ENCODE measurements at regions of chr17 and their contacts with region 1.

Region 1: GRCh38 chr17:42287926-42288802 is at the start of gene STAT5A:
- DNase-seq: peak; percentile 77
- H3K4me3 Mint-ChIP-seq: peak within 1 kb of the TSS; percentile 90
- H3K27ac Mint-ChIP-seq: peak within 1 kb of the TSS; percentile 95
- H3K4me1 Mint-ChIP-seq: peaks cover 41% of the 10 kb centered on the region
- H3K27me3 Mint-ChIP-seq: no peaks in the 10 kb centered on the region
- total RNA-seq, gene STAT5A: 288 and 302 TPM in 2 replicates

Region 2: GRCh38 chr17:41885733-41886132 is 402.4 kb before region 1 on chr17:
- intact Hi-C with region 1: no loop called
- DNase-seq: no peak
- H3K4me3 Mint-ChIP-seq: no peak overlapping the region
- H3K27ac Mint-ChIP-seq: no peak overlapping the region
- H3K4me1 Mint-ChIP-seq: peaks cover 3% of the 10 kb centered on the region
- H3K27me3 Mint-ChIP-seq: no peaks in the 10 kb centered on the region

Region 3: GRCh38 chr17:42221937-42222745 is 66.0 kb before region 1 on chr17:
- intact Hi-C with region 1: loop called (anchors 1 kb)
- DNase-seq: peak; percentile 38
- H3K4me3 Mint-ChIP-seq: no peak overlapping the region
- H3K27ac Mint-ChIP-seq: peak overlapping the region; percentile 22
- H3K4me1 Mint-ChIP-seq: peaks cover 4% of the 10 kb centered on the region
- H3K27me3 Mint-ChIP-seq: no peaks in the 10 kb centered on the region

Region 4: DNA sequence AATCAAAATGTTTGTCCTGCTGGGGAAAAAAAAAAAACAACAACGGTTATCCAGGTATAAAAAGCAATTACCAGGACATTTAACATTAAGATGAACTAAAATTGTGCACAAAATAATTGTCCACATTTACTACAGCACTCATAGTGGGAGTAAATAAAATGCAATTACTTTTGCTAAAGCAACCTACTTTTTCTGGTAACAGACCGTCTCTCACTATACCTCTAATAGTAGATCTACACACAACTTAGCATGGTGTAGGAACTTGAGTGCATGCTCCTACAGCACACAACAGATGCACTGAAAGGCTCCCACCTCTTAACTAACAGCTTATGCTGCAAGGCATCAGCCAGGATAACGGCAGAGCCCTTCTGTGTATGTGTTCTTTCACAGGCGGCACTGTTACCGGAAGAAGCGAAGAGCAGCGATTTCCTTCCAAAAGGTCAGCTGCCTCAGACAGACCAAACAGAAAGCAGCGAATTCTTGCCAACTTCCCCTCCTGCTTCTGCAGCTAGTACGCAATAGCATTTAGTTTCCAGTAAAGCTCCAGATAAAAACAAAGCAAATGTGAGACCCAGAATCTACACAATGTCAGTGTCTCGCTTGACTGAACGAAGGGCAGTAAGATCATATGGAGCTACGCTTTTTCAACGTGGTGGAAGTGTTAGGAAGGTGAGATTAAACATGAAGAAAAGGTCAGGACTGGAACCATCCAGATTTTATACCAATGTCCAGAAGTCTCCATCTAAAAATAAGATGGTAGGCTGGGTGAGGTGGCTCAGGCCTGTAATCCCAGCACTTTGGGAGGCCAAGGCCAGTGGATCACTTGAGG is 39.6 kb before region 1 on chr17:
- intact Hi-C with region 1: loop called (anchors 1 kb)
- DNase-seq: peak; percentile 74
- H3K4me3 Mint-ChIP-seq: peak overlapping the region; percentile 80
- H3K27ac Mint-ChIP-seq: peak overlapping the region; percentile 95
- H3K4me1 Mint-ChIP-seq: peaks cover 56% of the 10 kb centered on the region
- H3K27me3 Mint-ChIP-seq: no peaks in the 10 kb centered on the region

Region 5: DNA sequence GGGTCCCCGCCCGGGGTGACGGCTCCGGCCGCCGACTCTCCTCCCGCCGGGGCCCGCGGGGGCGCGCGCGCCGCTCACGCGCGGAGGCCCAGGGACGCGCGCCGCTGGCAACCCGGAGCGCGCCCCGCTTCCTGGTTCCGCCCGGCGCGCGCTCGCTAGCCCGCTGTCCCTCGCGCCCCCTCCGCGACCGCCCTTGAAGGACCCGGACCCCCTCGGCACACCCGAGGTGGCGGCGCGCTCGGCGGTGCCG is 11.9 kb before region 1 on chr17 and contains the start of gene STAT5B:
- intact Hi-C with region 1: loop called (anchors 1 kb)
- DNase-seq: peak; percentile 71
- H3K4me3 Mint-ChIP-seq: peak within 1 kb of the TSS; percentile 94
- H3K27ac Mint-ChIP-seq: peak within 1 kb of the TSS; percentile 93
- H3K4me1 Mint-ChIP-seq: peaks cover 39% of the 10 kb centered on the region
- H3K27me3 Mint-ChIP-seq: no peaks in the 10 kb centered on the region
- total RNA-seq, gene STAT5B: 162 and 164 TPM in 2 replicates